CD4-positive, alpha-beta memory T cell (primary cell): ENCODE measurements at regions of chr4 and their contacts with region 1.

Region 1: GRCh38 chr4:142164767-142165500 is 528.6 kb downstream of the IL15 start:
- DNase-seq: no peak
- H3K4me3 ChIP-seq: no peak overlapping the region
- H3K4me3 Mint-ChIP-seq: no peak overlapping the region
- H3K27ac ChIP-seq: no peak overlapping the region
- H3K27ac Mint-ChIP-seq: peak overlapping the region in 2 of 7 donors; percentile 58 to 71
- H3K4me1 ChIP-seq: peaks cover 4% of the 10 kb centered on the region
- H3K4me1 Mint-ChIP-seq: peaks cover 31 to 47% (median 37%) of the 10 kb centered on the region in 4 donors
- H3K27me3 ChIP-seq: no peaks in the 10 kb centered on the region
- H3K27me3 Mint-ChIP-seq: no peaks in the 10 kb centered on the region

Region 2: GRCh38 chr4:142150483-142150882 is 14.5 kb before region 1 on chr4:
- CTCF ChIA-PET with region 1: no interaction called
- POLR2A ChIA-PET with region 1: interaction called, 4 read pairs
- intact Hi-C with region 1: loop called (anchors 2 kb)
- DNase-seq: no peak
- H3K4me3 ChIP-seq: no peak overlapping the region
- H3K4me3 Mint-ChIP-seq: no peak overlapping the region
- H3K27ac ChIP-seq: no peak overlapping the region
- H3K27ac Mint-ChIP-seq: peak overlapping the region in 2 of 7 donors; percentile 22 to 30
- H3K4me1 ChIP-seq: peaks cover 15% of the 10 kb centered on the region
- H3K4me1 Mint-ChIP-seq: peaks cover 34 to 65% (median 51%) of the 10 kb centered on the region in 4 donors
- H3K27me3 ChIP-seq: no peaks in the 10 kb centered on the region
- H3K27me3 Mint-ChIP-seq: no peaks in the 10 kb centered on the region